AG04449 (cell line): ENCODE measurements at regions of chr10 and their contacts with region 1.

Region 1: GRCh38 chr10:116521404-116522290 is 24.1 kb upstream of the PNLIP start:
- DNase-seq: no peak
- H3K4me3 ChIP-seq: no peak overlapping the region
- CTCF ChIP-seq: peak; percentile 44

Region 2: DNA sequence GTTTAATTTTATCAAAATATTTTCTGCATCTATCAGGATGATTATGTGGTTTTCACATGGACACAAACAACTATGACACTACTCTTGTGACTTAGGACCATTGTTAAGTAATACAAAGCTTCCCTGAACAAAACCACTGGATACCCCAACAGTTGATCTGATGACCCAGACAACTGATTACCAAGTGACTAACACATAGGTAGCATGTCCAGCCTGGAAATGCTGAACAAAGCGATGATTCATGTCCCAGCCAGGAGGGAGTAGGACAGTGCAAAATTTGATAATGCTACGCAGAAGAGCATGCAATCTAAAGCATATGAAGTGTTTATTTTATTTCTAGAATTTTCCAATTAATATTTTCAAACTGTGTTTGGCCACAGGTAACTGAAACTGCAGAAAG is 15.2 kb after region 1 on chr10:
- CTCF ChIA-PET with region 1: interaction called, 10 read pairs
- POLR2A ChIA-PET with region 1: no interaction called
- DNase-seq: no peak
- H3K4me3 ChIP-seq: no peak overlapping the region
- CTCF ChIP-seq: no peak